CD4-positive, alpha-beta memory T cell (primary cell): ENCODE measurements at regions of chr4 and their contacts with region 1.

Region 1: DNA sequence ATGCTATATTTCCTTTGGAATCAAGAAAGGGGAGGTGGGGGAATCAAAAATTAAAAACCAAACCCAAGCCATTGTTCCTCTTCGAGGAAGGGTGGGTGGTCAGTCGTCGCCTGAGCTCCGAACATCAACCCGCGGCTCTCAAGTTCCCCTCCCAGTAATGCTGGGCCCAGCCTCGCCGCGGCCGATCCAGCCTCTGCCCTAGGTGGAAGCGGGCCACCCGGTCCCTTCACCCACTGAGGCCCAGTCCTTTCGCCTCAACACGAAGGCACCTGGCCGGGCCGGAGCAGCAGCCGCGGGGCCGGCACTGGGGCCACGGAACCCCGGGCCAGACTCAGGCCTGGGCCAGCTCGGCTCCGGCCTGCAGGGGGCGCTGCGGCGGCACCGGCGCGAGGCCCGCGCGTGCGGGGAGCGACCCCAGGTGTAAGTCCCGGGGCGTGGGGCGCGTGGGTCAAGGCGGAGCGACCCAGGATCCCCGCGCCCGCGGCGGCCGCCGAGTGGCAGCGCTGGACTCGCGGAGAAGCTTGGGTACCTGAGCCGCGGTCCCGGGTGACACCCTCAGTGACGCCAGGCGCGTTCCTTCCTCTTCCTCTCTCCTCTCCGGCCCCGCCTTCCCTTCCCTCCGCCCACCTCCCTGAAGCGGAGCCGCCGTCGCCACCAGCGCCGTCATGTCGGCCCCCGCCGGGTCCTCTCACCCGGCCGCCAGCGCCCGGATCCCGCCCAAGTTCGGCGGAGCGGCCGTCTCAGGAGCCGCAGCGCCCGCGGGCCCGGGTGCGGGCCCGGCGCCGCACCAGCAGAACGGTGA is at the start of gene SEC24B:
- DNase-seq: peak; percentile 89 to 93 (median 90)
- H3K4me3 ChIP-seq: peak within 1 kb of the TSS; percentile 44 to 75
- H3K4me3 Mint-ChIP-seq: peak within 1 kb of the TSS; percentile 88 to 95 (median 92)
- H3K27ac ChIP-seq: peak within 1 kb of the TSS; percentile 79
- H3K27ac Mint-ChIP-seq: peak within 1 kb of the TSS; percentile 92 to 98 (median 95)
- H3K4me1 ChIP-seq: peaks cover 49% of the 10 kb centered on the region
- H3K4me1 Mint-ChIP-seq: peaks cover 31 to 59% (median 45%) of the 10 kb centered on the region in 4 donors
- H3K27me3 ChIP-seq: no peaks in the 10 kb centered on the region
- H3K27me3 Mint-ChIP-seq: no peaks in the 10 kb centered on the region
- total RNA-seq, gene SEC24B: 37.0 to 37.7 TPM

Region 2: DNA sequence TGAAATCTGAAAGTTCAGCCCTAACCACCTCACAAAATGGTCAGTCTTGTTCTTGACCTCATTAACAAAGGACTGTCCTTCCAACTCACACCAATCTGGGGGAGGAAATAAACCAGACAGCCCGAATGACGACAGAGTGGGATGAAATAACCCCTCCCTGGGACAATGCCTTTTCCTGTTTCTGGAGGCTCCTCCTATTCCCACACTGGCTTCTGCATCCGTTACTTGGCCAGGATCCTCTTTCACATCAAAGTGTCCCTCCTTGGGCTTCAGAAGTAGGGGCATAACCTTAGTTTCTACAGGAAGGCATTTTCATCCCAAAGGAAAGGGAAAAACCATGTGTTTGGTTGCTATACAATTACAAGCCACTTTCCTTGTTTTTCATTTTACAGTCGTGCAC is 872.8 kb before region 1 on chr4:
- CTCF ChIA-PET with region 1: no interaction called
- POLR2A ChIA-PET with region 1: no interaction called
- intact Hi-C with region 1: no loop called
- DNase-seq: no peak
- H3K4me3 ChIP-seq: no peak overlapping the region
- H3K4me3 Mint-ChIP-seq: no peak overlapping the region
- H3K27ac ChIP-seq: no peak overlapping the region
- H3K27ac Mint-ChIP-seq: no peak overlapping the region
- H3K4me1 ChIP-seq: no peaks in the 10 kb centered on the region
- H3K4me1 Mint-ChIP-seq: peaks cover 0 to 4% (median 0%) of the 10 kb centered on the region in 4 donors
- H3K27me3 ChIP-seq: no peaks in the 10 kb centered on the region
- H3K27me3 Mint-ChIP-seq: peaks cover 0 to 2% of the 10 kb centered on the region in 2 donors

Region 3: GRCh38 chr4:109444182-109444844 is 10.9 kb after region 1 on chr4:
- CTCF ChIA-PET with region 1: interaction called, 12 read pairs
- POLR2A ChIA-PET with region 1: interaction called, 6 read pairs
- intact Hi-C with region 1: no loop called
- DNase-seq: no peak
- H3K4me3 ChIP-seq: no peak overlapping the region
- H3K4me3 Mint-ChIP-seq: peak overlapping the region in 3 of 8 donors; percentile 27 to 44 (median 44)
- H3K27ac ChIP-seq: no peak overlapping the region
- H3K27ac Mint-ChIP-seq: peak overlapping the region in 2 of 7 donors; percentile 73 to 82
- H3K4me1 ChIP-seq: peaks cover 61% of the 10 kb centered on the region
- H3K4me1 Mint-ChIP-seq: peaks cover 45 to 80% (median 65%) of the 10 kb centered on the region in 4 donors
- H3K27me3 ChIP-seq: no peaks in the 10 kb centered on the region
- H3K27me3 Mint-ChIP-seq: no peaks in the 10 kb centered on the region

Region 4: GRCh38 chr4:109574102-109574850 is 140.9 kb after region 1 on chr4:
- CTCF ChIA-PET with region 1: interaction called, 6 read pairs
- POLR2A ChIA-PET with region 1: interaction called, 11 read pairs
- intact Hi-C with region 1: loop called (anchors 1 kb)
- DNase-seq: peak in 4 of 5 donors; percentile 31 to 45 (median 40)
- H3K4me3 ChIP-seq: no peak overlapping the region
- H3K4me3 Mint-ChIP-seq: peak overlapping the region; percentile 4 to 79 (median 50)
- H3K27ac ChIP-seq: no peak overlapping the region
- H3K27ac Mint-ChIP-seq: peak overlapping the region; percentile 10 to 88 (median 59)
- H3K4me1 ChIP-seq: peaks cover 63% of the 10 kb centered on the region
- H3K4me1 Mint-ChIP-seq: peaks cover 52 to 80% (median 67%) of the 10 kb centered on the region in 4 donors
- H3K27me3 ChIP-seq: no peaks in the 10 kb centered on the region
- H3K27me3 Mint-ChIP-seq: no peaks in the 10 kb centered on the region

Region 5: GRCh38 chr4:109658871-109659410 is 225.5 kb after region 1 on chr4:
- CTCF ChIA-PET with region 1: interaction called, 10 read pairs
- POLR2A ChIA-PET with region 1: interaction called, 3 read pairs
- intact Hi-C with region 1: loop called (anchors 1 kb)
- DNase-seq: peak in 2 of 5 donors; percentile 22 to 24
- H3K4me3 ChIP-seq: no peak overlapping the region
- H3K4me3 Mint-ChIP-seq: no peak overlapping the region
- H3K27ac ChIP-seq: no peak overlapping the region
- H3K27ac Mint-ChIP-seq: peak overlapping the region in 4 of 7 donors; percentile 24 to 65 (median 47)
- H3K4me1 ChIP-seq: peaks cover 23% of the 10 kb centered on the region
- H3K4me1 Mint-ChIP-seq: peaks cover 22 to 49% (median 35%) of the 10 kb centered on the region in 4 donors
- H3K27me3 ChIP-seq: no peaks in the 10 kb centered on the region
- H3K27me3 Mint-ChIP-seq: no peaks in the 10 kb centered on the region

Region 6: DNA sequence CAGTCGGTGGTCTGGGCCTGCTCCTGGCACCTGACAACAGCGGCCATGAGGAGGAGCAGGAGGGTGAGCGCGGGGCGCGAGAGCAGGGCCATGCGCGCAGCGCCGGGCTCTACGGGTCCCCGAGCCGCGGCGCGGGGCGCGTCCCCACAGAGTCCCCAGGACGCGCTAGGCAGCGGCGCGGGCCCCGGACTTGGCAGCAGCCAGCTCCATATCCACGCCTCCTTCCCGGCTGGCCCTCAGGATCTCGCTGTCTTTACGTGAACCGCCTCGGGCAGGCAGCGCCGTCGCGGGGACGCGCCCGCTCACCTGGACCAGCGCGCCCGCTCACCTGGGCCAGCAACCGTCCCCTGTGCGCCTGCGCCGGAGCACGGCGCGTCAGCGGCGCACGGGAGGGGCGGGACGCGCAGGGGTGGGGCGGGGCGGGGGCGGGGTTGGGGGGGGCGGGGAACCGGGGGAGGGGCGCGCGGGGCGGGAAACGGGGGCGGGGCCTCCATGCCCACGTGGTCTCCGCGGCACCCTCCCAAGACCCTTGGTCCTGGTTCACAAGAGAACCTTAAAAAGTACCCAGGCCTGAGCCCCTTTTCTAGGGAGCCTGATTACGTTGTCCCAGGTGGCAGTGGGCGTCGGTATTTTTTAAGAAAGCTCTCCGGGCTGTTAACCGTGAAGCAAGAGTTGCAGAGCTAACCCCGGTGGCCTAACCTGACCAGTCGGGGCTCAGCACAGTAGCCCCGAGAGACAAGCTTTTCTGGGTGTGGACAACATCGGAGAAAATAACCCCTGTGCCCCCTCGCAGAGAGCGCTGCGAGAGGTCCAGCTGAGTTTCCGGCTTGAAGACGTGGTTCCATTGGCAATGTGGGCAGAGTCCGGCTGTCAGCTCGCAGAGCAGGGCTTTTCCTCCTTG is 296.6 kb after region 1 on chr4 and contains the start of gene PLA2G12A:
- CTCF ChIA-PET with region 1: interaction called, 8 read pairs
- POLR2A ChIA-PET with region 1: interaction called, 7 read pairs
- intact Hi-C with region 1: loop called (anchors 2 kb)
- DNase-seq: peak; percentile 78 to 90 (median 87)
- H3K4me3 ChIP-seq: peak within 1 kb of the TSS; percentile 58 to 94
- H3K4me3 Mint-ChIP-seq: peak within 1 kb of the TSS; percentile 89 to 93 (median 91)
- H3K27ac ChIP-seq: peak within 1 kb of the TSS; percentile 72
- H3K27ac Mint-ChIP-seq: peak within 1 kb of the TSS; percentile 73 to 94 (median 90)
- H3K4me1 ChIP-seq: peaks cover 18% of the 10 kb centered on the region
- H3K4me1 Mint-ChIP-seq: peaks cover 18 to 32% (median 21%) of the 10 kb centered on the region in 4 donors
- H3K27me3 ChIP-seq: no peaks in the 10 kb centered on the region
- H3K27me3 Mint-ChIP-seq: peaks cover 0 to 1% of the 10 kb centered on the region in 2 donors
- total RNA-seq, gene PLA2G12A: 15.7 to 18.1 TPM

Region 7: DNA sequence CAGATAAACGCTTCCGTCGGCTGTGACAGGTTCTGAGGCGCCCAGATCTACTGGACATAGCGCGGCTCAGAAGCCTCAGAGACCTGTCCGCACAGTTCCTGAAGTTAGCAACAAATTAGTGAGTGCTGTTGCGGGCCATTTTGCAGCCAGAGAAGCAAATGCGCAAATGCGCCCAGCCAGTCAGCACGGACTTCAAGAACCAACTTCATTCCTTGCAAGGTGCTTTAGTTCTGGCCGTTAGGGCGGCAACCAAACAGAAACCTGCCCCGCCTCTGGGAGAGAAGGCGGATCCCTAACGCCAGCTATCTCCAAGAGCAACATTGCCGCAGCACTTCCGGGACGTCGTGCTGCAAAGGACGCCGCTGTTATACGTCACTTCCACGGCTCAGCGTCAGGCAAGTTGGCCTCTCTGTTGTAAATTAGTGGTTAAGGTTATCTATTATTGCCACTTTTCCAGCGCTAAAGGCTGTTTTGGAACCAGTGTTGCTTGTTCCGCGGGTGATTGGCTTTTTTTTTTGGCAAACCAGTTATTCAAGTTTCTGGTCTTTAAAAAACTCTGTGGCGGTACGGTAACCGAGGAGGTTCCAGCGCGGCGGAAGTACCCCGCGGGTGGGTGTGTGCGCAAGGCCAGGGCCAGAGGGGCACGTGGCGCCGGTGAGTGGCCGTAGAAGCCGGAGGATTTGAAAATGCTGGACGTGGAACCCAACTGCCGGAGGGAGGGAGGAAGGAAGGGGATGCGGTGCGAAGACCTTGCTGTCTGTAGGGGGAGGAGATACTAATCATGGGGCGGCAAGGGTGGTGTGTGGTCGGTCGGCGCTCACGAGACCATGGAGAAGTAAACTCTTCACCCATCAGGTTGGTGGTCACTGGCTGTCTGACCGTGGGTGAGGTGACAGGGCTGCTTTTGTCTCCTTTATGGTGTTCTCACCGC is 382.0 kb after region 1 on chr4 and contains the start of gene GAR1:
- CTCF ChIA-PET with region 1: interaction called, 17 read pairs
- POLR2A ChIA-PET with region 1: interaction called, 23 read pairs
- intact Hi-C with region 1: loop called (anchors 1 kb)
- DNase-seq: peak; percentile 85 to 93 (median 87)
- H3K4me3 ChIP-seq: peak within 1 kb of the TSS; percentile 98 to 100
- H3K4me3 Mint-ChIP-seq: peak within 1 kb of the TSS; percentile 97 to 99 (median 98)
- H3K27ac ChIP-seq: peak within 1 kb of the TSS; percentile 93
- H3K27ac Mint-ChIP-seq: peak within 1 kb of the TSS; percentile 97 to 99 (median 99)
- H3K4me1 ChIP-seq: peaks cover 22% of the 10 kb centered on the region
- H3K4me1 Mint-ChIP-seq: peaks cover 27 to 44% (median 36%) of the 10 kb centered on the region in 4 donors
- H3K27me3 ChIP-seq: no peaks in the 10 kb centered on the region
- H3K27me3 Mint-ChIP-seq: no peaks in the 10 kb centered on the region
- total RNA-seq, gene GAR1: 13.7 to 14.1 TPM

Region 8: GRCh38 chr4:110193822-110194761 is 760.7 kb after region 1 on chr4:
- CTCF ChIA-PET with region 1: no interaction called
- POLR2A ChIA-PET with region 1: no interaction called
- intact Hi-C with region 1: loop called (anchors 1 kb)
- DNase-seq: peak; percentile 71 to 87 (median 78)
- H3K4me3 ChIP-seq: no peak overlapping the region
- H3K4me3 Mint-ChIP-seq: peak overlapping the region in 6 of 8 donors; percentile 12 to 40 (median 31)
- H3K27ac ChIP-seq: peak overlapping the region; percentile 21
- H3K27ac Mint-ChIP-seq: peak overlapping the region; percentile 54 to 91 (median 84)
- H3K4me1 ChIP-seq: peaks cover 27% of the 10 kb centered on the region
- H3K4me1 Mint-ChIP-seq: peaks cover 17 to 43% (median 27%) of the 10 kb centered on the region in 4 donors
- H3K27me3 ChIP-seq: no peaks in the 10 kb centered on the region
- H3K27me3 Mint-ChIP-seq: no peaks in the 10 kb centered on the region